ENCODE measurements at regions of chr2 and their contacts with region 1.

Region 1: GRCh38 chr2:84495539-84496146 is 20.7 kb upstream of the DNAH6 start:
- DNase-seq: no peak
- H3K4me3 ChIP-seq: no peak overlapping the region
- H3K27ac ChIP-seq: no peak overlapping the region
- H3K27me3 ChIP-seq: no peaks in the 10 kb centered on the region
- CTCF ChIP-seq: peak; percentile 63 to 93 (median 80)

Region 2: DNA sequence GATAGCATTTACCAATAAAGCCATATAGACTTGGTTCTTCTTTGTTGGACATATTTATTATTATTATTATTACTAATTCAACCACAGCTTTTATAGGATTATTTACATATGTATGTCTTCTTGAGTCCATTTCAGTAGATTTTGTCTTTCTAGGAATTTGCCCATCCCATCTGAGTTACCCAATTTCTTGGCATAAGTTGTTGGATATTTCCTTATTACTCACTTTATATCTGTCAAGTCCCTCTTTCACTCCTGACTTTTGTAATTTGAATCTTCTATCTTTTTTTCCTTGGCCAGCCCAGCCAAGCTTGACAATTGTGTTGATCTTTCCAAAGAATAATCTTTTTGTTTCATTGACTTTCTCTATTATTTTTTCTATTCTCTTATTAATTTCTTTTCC is 580.3 kb before region 1 on chr2:
- intact Hi-C with region 1: no loop called
- DNase-seq: no peak
- H3K4me3 ChIP-seq: no peak overlapping the region
- H3K27ac ChIP-seq: no peak overlapping the region
- H3K27me3 ChIP-seq: peaks cover 0 to 4% (median 0%) of the 10 kb centered on the region in 45 donors
- CTCF ChIP-seq: no peak

Region 3: GRCh38 chr2:84631047-84631446 is 135.4 kb after region 1 on chr2:
- intact Hi-C with region 1: loop called (anchors 5 kb)
- DNase-seq: no peak
- H3K4me3 ChIP-seq: peak overlapping the region in 6 of 59 donors; percentile 2 to 38 (median 26)
- H3K27ac ChIP-seq: no peak overlapping the region
- H3K27me3 ChIP-seq: no peaks in the 10 kb centered on the region
- CTCF ChIP-seq: peak in 52 of 56 donors; percentile 14 to 70 (median 50)

Region 4: GRCh38 chr2:84865181-84865783 is 369.6 kb after region 1 on chr2:
- intact Hi-C with region 1: loop called in 1 of 2 experiments (anchors 2 kb)
- DNase-seq: no peak
- H3K4me3 ChIP-seq: no peak overlapping the region
- H3K27ac ChIP-seq: no peak overlapping the region
- H3K27me3 ChIP-seq: no peaks in the 10 kb centered on the region
- CTCF ChIP-seq: peak in 52 of 56 donors; percentile 27 to 69 (median 50)

Region 5: GRCh38 chr2:84881581-84882414 is 386.2 kb after region 1 on chr2:
- intact Hi-C with region 1: loop called (anchors 2 to 5 kb)
- DNase-seq: peak; percentile 57 to 82 (median 74)
- H3K4me3 ChIP-seq: peak overlapping the region; percentile 32 to 76 (median 62)
- H3K27ac ChIP-seq: peak overlapping the region in 1 of 59 donors; percentile 36
- H3K27me3 ChIP-seq: peaks cover 0 to 40% (median 12%) of the 10 kb centered on the region in 45 donors
- CTCF ChIP-seq: peak; percentile 55 to 87 (median 77)

Region 6: GRCh38 chr2:85288244-85288725 is 792.6 kb after region 1 on chr2:
- intact Hi-C with region 1: loop called in 1 of 2 experiments (anchors 10 kb)
- DNase-seq: no peak
- H3K4me3 ChIP-seq: no peak overlapping the region
- H3K27ac ChIP-seq: no peak overlapping the region
- H3K27me3 ChIP-seq: no peaks in the 10 kb centered on the region
- CTCF ChIP-seq: no peak

Measured in dorsolateral prefrontal cortex (tissue), 120 donors.